ENCODE measurements at regions of chr15 and their contacts with region 1.

Region 1: DNA sequence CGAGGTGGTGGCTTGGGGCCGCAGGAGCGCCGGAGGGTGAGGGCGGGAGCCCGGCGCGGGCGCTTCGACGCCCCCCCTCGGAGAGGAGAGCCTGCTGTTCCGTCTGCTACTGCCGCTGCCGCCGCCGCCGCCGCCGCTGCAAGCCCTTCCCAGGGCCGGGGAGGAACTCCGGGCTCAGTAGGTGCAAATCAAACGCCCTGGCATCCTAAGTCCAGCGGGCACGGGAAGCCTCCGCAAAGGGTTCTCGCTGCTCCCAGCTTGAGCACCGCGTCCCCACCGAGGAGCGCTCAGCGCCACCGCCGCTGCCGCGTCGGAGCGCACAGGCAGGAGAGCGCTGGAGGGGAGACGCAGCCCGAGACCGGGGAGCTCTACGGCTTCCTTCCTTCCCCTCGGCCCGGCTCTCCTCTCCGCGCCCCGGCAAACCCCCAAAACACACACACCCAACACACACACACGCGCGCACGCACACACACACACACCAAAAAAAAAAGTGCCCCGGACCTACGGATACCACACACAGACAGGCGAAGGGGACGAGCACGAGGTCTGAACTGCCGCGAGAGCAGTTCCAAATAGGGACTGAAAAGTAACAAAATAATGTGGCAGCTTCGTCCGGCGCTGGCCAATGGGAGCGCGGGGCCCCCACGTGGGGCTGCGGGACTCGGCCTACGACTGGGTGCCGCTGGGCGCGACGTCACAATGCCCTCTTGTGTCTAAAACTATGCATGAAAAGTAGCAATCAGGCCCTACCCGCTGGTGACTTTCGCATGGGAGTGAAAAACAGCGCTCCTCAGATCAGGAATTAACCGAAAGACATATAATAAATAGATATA is at the start of gene TLE3:
- DNase-seq: peak; percentile 94

Region 2: GRCh38 chr15:69973102-69973712 is 124.3 kb before region 1 on chr15:
- CTCF ChIA-PET with region 1: no interaction called
- POLR2A ChIA-PET with region 1: no interaction called
- DNase-seq: peak; percentile 43

Region 3: GRCh38 chr15:69983771-69984170 is 113.8 kb before region 1 on chr15:
- CTCF ChIA-PET with region 1: no interaction called
- POLR2A ChIA-PET with region 1: no interaction called
- DNase-seq: no peak

Region 4: GRCh38 chr15:70008697-70009290 is 88.8 kb before region 1 on chr15:
- CTCF ChIA-PET with region 1: no interaction called
- POLR2A ChIA-PET with region 1: no interaction called
- DNase-seq: no peak

Region 5: GRCh38 chr15:70111203-70112073 is 13.9 kb after region 1 on chr15:
- CTCF ChIA-PET with region 1: interaction called, 7 read pairs
- POLR2A ChIA-PET with region 1: interaction called, 108 read pairs
- DNase-seq: peak; percentile 79

Region 6: DNA sequence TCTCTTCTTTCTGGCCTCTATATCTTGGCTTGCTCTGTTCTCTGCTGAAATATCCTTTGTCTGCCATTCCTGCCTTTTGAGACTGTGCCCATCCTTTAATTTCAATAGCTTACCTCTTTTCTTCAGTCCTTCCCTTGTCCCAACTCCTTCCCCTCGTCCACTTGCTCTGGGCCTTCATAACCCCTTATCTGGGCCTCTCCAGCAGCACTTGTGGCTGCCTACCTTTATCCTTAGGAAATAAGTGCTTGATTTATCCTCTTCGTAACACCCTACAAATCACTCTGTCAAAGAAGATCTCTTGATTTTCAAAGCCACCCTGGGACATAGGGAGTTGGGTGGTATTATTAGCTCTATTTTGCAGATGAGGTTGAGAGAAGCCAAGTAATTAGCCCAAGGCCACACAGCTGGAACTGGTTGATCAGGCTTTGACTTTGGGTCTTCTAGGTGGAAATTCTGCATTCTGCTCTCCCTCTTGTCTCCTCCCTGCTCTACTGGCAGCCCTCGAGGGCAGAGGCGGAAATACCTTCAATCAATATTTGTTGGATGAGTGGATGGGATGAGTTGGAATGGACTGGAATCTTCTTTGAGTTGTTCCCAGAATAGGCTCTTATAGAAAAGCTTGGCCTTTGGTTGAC is 84.2 kb after region 1 on chr15:
- CTCF ChIA-PET with region 1: interaction called, 8 read pairs
- POLR2A ChIA-PET with region 1: interaction called, 10 read pairs
- DNase-seq: no peak

Region 7: DNA sequence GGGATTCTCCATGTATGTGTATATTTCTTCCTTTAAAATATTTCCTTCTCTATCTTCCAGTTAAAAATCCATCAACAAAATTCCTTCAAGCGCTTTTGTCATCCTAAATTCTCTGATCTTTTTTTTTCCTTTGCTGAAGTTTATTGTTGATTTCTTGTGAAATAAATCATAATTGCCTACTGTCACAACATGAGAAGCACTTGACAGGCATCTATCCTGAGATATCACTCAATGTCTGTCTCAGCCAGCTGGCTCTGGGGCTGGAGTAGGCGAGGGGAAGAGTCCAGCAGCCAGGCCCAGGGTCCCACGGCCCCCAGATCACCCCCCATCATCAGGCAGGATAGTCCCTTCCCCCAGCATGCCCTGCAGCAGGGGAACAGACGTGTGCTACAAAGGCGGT is 109.1 kb after region 1 on chr15:
- CTCF ChIA-PET with region 1: no interaction called
- POLR2A ChIA-PET with region 1: no interaction called
- DNase-seq: no peak

Measured in HEK293T (cell line).